GM12878 (cell line): ENCODE measurements at regions of chr7 and their contacts with region 1.

Region 1: GRCh38 chr7:151782598-151783448 is 94.1 kb downstream of the PRKAG2 start:
- DNase-seq: no peak
- ATAC-seq: peak; percentile 99
- H3K4me3 ChIP-seq: no peak overlapping the region
- H3K27ac ChIP-seq: no peak overlapping the region
- H3K4me1 ChIP-seq: no peaks in the 10 kb centered on the region
- H3K27me3 ChIP-seq: no peaks in the 10 kb centered on the region; a peak in 1 of 4 replicates
- CTCF ChIP-seq: peak; percentile 80 to 94 (median 92)
- EP300 ChIP-seq: no peak
- POLR2A ChIP-seq: no peak
- RAD21 ChIP-seq: peak; percentile 42

Region 2: GRCh38 chr7:151623766-151624165 is 159.1 kb before region 1 on chr7:
- CTCF ChIA-PET with region 1: no interaction called
- POLR2A ChIA-PET with region 1: no interaction called
- RAD21 ChIA-PET with region 1: no interaction called
- SMC1A ChIA-PET with region 1: no interaction called
- in situ Hi-C with region 1: no loop called
- intact Hi-C with region 1: no loop called
- DNase-seq: no peak
- ATAC-seq: no peak
- H3K4me3 ChIP-seq: no peak overlapping the region
- H3K27ac ChIP-seq: no peak overlapping the region
- H3K4me1 ChIP-seq: no peaks in the 10 kb centered on the region
- H3K27me3 ChIP-seq: no peaks in the 10 kb centered on the region
- CTCF ChIP-seq: no peak
- EP300 ChIP-seq: no peak
- POLR2A ChIP-seq: no peak
- RAD21 ChIP-seq: no peak

Region 3: DNA sequence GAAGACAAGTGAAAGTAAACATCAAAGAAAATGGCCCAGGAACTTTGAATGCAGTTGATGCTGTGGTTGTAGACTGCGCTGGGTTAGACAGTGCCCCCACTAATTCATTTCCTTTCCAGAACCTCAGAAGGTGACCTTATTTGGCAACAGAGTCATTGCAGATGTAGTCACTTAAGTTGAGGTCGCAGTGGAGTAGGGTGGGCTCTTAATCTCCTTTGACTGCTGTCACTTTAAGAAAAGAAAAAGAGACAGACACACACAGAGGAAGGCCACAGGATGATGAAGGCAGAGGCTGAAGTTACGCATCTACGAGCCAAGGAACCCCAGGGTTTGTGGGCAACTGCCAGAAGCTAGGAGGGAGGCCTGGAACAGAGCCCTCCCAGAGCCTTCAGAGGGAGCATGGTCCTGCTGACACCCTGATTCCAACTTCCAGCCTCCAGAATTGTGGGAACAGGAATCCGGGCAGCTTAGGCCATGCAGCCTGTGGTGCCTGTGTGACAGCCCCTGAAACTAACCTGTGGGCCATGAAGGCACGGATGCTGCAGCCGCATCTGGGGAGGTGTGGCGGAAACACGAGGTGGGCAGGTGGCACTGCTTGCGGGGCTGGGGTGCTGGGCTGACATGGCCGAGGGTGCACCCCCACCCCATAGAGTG is 13.5 kb before region 1 on chr7:
- CTCF ChIA-PET with region 1: interaction called, 21 read pairs
- POLR2A ChIA-PET with region 1: no interaction called
- RAD21 ChIA-PET with region 1: interaction called, 3 read pairs
- SMC1A ChIA-PET with region 1: no interaction called
- in situ Hi-C with region 1: no loop called
- intact Hi-C with region 1: no loop called
- DNase-seq: peak; percentile 60
- ATAC-seq: peak; percentile 90
- H3K4me3 ChIP-seq: no peak overlapping the region
- H3K27ac ChIP-seq: 0 out of 2 replicates have a peak overlapping the region, but pooled peaks have one; percentile 17
- H3K4me1 ChIP-seq: peaks cover 16% of the 10 kb centered on the region
- H3K27me3 ChIP-seq: no peaks in the 10 kb centered on the region
- CTCF ChIP-seq: no peak
- EP300 ChIP-seq: no peak; a peak in 1 of 4 replicates
- POLR2A ChIP-seq: peak; percentile 36; the same call in 1 of the 2 replicates
- RAD21 ChIP-seq: no peak

Region 4: GRCh38 chr7:151932358-151932876 is 149.6 kb after region 1 on chr7:
- CTCF ChIA-PET with region 1: no interaction called
- POLR2A ChIA-PET with region 1: no interaction called
- RAD21 ChIA-PET with region 1: no interaction called
- SMC1A ChIA-PET with region 1: no interaction called
- in situ Hi-C with region 1: no loop called
- intact Hi-C with region 1: loop called (anchors 5 kb)
- DNase-seq: no peak
- ATAC-seq: no peak
- H3K4me3 ChIP-seq: no peak overlapping the region
- H3K27ac ChIP-seq: no peak overlapping the region
- H3K4me1 ChIP-seq: no peaks in the 10 kb centered on the region
- H3K27me3 ChIP-seq: no peaks in the 10 kb centered on the region
- CTCF ChIP-seq: no peak
- EP300 ChIP-seq: no peak
- POLR2A ChIP-seq: no peak
- RAD21 ChIP-seq: no peak

Region 5: DNA sequence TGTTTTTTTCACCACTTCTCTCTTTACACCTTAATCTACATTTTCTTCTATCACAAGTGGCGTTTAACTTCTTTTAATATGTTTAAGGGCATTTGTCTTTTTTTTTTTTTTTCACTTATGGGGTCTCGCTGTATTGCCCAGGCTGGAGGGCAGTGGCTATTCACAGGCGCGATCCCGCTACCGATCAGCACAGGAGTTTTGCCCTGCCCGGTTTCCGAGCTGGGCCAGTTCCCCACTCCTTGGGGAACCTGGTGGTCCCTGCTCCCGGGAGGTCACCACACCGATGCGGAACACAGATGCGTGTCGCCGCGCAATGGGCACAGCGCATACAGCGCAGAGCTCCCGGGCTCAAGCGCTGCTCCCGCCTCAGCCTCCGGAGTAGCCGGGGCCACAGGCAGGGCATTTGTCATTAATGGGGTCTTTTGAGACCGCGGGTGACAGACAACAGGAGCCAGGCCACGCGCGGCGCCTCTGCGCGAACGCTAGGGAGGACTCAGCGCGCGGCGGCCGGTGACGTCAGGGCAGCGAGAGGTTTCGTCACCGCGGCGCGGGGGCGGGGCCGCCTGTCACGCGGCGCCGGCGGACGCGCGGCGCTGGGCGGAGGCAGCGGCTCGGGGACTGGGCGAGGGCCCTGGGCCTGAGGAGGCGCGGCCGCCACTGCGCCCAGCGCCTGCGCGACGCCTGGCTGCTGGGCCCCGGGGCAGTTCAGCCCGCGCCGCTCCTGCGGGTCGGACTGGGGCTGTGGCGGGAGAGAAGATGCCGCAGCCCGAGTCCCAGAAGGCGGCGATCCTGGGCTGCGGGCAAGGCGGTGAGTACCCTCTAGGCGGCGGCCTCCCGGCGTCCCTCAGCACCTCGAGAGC is 242.5 kb after region 1 on chr7 and contains the start of gene GALNT11:
- CTCF ChIA-PET with region 1: interaction called, 4 read pairs
- POLR2A ChIA-PET with region 1: no interaction called
- RAD21 ChIA-PET with region 1: no interaction called
- SMC1A ChIA-PET with region 1: no interaction called
- in situ Hi-C with region 1: no loop called
- intact Hi-C with region 1: loop called (anchors 10 kb)
- DNase-seq: no peak
- ATAC-seq: peak; percentile 98
- H3K4me3 ChIP-seq: peak within 1 kb of the TSS; percentile 62
- H3K27ac ChIP-seq: no peak within 1 kb of the TSS
- H3K4me1 ChIP-seq: peaks cover 4% of the 10 kb centered on the region
- H3K27me3 ChIP-seq: no peaks in the 10 kb centered on the region
- CTCF ChIP-seq: peak in 2 of 3 experiments; percentile 16 to 33; a peak in 3 of 6 replicates
- EP300 ChIP-seq: no peak
- POLR2A ChIP-seq: peak; percentile 79
- RAD21 ChIP-seq: no peak
- polyA plus RNA-seq, gene GALNT11: 2.0 to 3.1 TPM